Transverse colon (tissue), 4 donors: ENCODE measurements at regions of chr3 and their contacts with region 1.

Region 1: GRCh38 chr3:1600206-1600605 is 498.5 kb upstream of the CNTN4 start:
- DNase-seq: no peak
- H3K4me3 ChIP-seq: no peak overlapping the region
- H3K27ac ChIP-seq: no peak overlapping the region
- H3K4me1 ChIP-seq: no peaks in the 10 kb centered on the region
- H3K27me3 ChIP-seq: no peaks in the 10 kb centered on the region
- CTCF ChIP-seq: no peak
- EP300 ChIP-seq: no peak
- POLR2A ChIP-seq: no peak

Region 2: GRCh38 chr3:317012-317411 is 1283.2 kb before region 1 on chr3:
- in situ Hi-C with region 1: no loop called
- intact Hi-C with region 1: loop called (anchors 5 kb)
- DNase-seq: no peak
- H3K4me3 ChIP-seq: no peak overlapping the region
- H3K27ac ChIP-seq: no peak overlapping the region
- H3K4me1 ChIP-seq: no peaks in the 10 kb centered on the region
- H3K27me3 ChIP-seq: no peaks in the 10 kb centered on the region
- CTCF ChIP-seq: no peak
- EP300 ChIP-seq: no peak
- POLR2A ChIP-seq: no peak

Region 3: GRCh38 chr3:1092771-1093170 is 507.4 kb before region 1 on chr3 and contains the start of gene CNTN6:
- in situ Hi-C with region 1: no loop called
- intact Hi-C with region 1: no loop called
- DNase-seq: no peak
- H3K4me3 ChIP-seq: no peak within 1 kb of the TSS
- H3K27ac ChIP-seq: no peak within 1 kb of the TSS
- H3K4me1 ChIP-seq: no peaks in the 10 kb centered on the region
- H3K27me3 ChIP-seq: no peaks in the 10 kb centered on the region
- CTCF ChIP-seq: no peak
- EP300 ChIP-seq: no peak
- POLR2A ChIP-seq: no peak
- total RNA-seq, gene CNTN6: not detected

Region 4: DNA sequence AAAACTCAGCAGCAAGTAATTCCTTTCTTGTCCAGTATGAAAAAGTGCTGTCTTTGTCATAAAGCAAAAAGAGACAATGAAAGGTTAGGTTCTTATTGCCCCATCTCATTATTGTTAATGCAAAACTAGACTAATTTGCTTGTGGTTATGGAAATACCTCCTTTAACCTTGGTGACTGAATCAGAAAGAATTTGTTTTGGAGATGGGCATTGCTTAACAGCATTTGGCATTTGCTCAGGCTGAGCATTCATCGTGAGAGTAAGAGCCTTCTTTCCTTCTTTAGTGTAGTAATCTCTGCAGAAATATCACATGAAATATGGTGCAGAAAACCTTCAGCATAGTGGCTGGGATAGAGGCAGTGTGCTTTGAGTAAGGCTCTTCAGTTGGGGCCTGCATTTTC is 404.3 kb before region 1 on chr3:
- in situ Hi-C with region 1: no loop called
- intact Hi-C with region 1: no loop called
- DNase-seq: no peak
- H3K4me3 ChIP-seq: no peak overlapping the region
- H3K27ac ChIP-seq: no peak overlapping the region
- H3K4me1 ChIP-seq: no peaks in the 10 kb centered on the region
- H3K27me3 ChIP-seq: no peaks in the 10 kb centered on the region
- CTCF ChIP-seq: no peak
- EP300 ChIP-seq: no peak
- POLR2A ChIP-seq: no peak